KBM-7 (cell line): ENCODE measurements at regions of chr1 and their contacts with region 1.

Region 1: DNA sequence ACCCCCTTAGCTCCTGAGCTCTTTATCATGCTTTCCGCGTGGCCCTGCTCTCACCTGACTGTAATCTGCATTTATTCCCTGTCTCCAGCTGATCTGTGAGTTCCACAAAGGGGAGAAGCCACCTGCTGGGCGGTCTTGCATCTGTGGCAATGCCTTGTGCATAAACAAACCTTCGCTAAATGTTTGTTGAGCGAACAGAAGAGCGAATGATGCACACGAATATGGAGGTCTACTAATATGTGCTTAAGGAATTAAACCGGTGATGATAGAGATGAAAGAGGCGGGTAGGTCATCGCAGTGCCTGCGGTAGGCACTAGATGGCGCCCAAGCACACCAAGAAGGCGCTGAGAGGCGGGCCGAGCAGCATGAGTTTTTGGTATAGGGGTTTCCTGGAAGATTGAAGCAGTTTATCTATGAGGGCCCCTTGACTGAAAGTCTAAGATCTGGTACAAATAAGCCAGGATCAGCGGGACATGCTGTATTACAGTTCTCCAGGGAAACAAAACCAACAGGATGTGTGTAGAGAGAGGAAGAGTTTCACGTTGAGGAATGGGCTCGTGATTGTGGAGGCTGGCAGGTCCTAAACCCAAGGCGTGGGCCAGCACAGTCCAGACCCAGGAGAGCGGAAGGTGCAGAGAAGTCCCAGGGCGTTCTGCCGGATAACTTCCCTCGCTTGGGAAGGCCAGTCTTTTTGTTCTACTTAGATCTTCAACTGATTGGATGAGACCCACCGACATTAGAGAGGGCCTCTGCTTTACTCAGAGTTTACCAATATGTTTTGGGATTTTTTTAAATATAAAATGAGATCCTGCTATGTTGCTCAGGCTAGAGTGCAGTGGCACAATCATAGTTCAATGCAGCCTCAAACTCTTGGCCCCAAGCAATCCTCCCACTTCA is 34.7 kb downstream of the TOMM20 start:
- DNase-seq: peak; percentile 89

Region 2: DNA sequence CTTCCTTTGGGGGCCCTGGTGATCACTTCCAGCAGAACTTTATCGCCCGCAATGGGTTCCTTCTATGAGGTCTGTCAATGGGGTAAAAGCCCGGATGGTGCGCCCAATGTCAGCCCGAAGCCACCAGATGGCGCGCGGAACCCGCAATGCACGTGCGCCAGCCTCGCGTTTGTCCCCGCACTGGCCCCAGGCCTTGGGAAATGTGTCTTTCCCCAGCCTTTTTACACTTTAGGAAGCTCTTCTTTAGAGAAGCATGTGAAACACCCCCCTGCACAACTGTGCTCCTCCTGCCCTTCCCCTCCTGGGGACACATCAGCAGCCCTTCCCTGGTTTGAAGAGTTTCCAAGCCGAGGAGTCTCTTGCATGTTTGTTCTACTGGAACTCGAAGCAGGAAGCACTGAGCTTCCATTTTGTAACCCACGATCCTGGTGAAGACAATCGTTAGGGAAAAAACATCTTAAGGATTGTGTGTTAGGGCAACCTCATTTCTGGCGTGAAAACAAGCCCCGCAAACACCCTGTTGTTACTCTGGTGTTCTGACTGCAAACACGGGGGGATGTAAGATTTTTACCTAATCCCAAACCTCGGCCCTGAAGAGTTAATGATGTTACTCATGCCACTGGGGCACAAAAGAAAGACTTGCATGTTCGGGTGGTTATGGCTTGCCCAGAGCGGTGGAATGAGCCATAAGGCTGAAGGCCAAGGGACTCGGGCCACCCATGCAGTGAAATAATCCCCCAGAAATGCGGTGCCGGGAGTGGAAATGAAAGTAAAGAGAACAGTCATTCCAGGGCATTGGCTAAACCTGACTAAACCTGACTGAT is 594.6 kb before region 1 on chr1:
- in situ Hi-C with region 1: loop called (anchors 10 kb)
- DNase-seq: peak; percentile 95

Region 3: DNA sequence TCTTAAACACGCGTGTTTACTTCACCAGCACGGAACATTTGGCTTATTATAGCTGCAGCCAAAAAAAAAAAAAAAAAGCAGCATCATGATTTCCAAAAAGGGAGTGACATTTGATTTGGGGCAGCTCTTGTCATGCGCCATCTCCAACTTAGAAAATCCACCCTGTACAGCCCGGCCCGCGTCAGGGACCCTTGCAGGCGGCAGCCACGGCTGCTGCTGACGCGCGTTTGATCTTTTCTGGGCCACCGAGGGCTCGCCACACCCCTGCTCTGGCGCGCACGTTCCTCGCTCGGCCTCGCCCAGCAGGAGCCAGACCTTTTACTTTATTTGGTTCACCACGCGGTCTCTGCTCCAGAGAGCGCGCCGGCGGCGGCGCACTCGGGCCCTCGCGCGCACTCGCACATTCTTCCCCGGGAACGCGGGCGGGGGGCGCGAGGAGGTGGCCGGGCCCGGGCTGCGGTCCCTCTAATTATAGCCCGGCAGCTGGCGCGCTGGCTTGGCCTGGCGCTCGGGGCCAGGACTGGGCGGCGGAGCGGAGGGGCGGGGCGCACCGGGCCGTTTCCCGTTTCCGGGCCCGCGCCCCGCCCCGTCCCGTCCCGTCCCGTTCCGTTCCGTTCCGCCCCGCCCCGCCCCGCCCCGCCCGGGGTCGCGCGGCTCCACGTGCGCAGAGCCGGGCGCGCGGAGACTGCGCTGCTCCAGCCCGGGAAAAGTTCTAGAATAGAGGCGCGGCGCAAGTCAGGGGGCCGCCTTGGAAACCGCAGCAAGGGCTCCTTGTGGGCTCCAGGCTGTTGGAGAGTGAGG is 494.1 kb before region 1 on chr1:
- in situ Hi-C with region 1: loop called (anchors 25 kb)
- DNase-seq: peak; percentile 95